Caco-2 (cell line): ENCODE measurements at regions of chr12 and their contacts with region 1.

Region 1: DNA sequence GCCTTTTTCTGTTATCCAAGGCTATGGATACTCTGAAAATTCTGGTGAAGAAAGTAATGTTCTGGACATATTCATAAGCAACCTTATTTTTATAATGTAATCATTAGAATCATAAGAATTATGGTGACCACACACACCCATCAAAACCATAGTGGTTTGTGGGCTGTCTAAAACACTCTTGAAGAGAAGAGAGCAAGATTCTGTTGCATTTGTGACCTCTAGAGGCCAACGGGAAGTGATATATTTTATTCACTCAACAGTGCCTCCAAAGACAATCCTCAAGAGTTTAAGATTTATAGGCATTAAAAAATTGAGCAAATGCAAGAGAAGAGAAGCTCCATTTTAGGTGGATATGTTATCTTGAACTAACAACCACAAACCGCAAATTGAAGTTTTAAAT is 68.5 kb upstream of the LGR5 start:
- DNase-seq: peak in 1 of 2 experiments; percentile 2
- H3K4me3 ChIP-seq: no peak overlapping the region
- H3K4me3 Mint-ChIP-seq: no peak overlapping the region
- H3K27ac Mint-ChIP-seq: no peak overlapping the region
- H3K4me1 ChIP-seq: peaks cover 3% of the 10 kb centered on the region; the same call in 1 of the 2 replicates
- H3K4me1 Mint-ChIP-seq: no peaks in the 10 kb centered on the region
- H3K27me3 ChIP-seq: no peaks in the 10 kb centered on the region
- H3K27me3 Mint-ChIP-seq: no peaks in the 10 kb centered on the region
- CTCF ChIP-seq: peak in 1 of 2 experiments; percentile 22

Region 2: DNA sequence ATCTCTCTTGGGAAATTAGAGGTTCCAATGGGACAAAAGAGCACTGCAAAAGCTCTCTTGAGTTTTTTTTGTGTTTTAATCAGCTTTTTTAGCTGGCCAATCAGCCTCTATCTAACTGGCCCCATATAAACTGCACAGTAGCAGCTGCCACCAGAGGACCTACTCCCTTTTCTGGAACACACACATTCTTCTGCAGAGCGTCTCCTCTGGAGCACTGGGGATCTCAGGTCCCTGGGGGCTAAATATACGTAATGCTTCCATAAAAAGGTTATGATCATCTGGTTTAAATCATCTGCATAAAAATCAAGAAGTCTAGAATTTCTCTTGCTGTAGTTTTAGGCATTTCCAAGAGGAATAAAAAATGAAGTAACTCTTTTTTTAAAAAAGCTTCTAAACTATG is 245.6 kb before region 1 on chr12:
- CTCF ChIA-PET with region 1: no interaction called
- POLR2A ChIA-PET with region 1: no interaction called
- intact Hi-C with region 1: loop called (anchors 1 kb)
- DNase-seq: no peak
- H3K4me3 ChIP-seq: no peak overlapping the region
- H3K4me3 Mint-ChIP-seq: no peak overlapping the region
- H3K27ac Mint-ChIP-seq: no peak overlapping the region
- H3K4me1 ChIP-seq: no peaks in the 10 kb centered on the region
- H3K4me1 Mint-ChIP-seq: no peaks in the 10 kb centered on the region
- H3K27me3 ChIP-seq: no peaks in the 10 kb centered on the region
- H3K27me3 Mint-ChIP-seq: no peaks in the 10 kb centered on the region
- CTCF ChIP-seq: peak in 1 of 2 experiments; percentile 25

Region 3: DNA sequence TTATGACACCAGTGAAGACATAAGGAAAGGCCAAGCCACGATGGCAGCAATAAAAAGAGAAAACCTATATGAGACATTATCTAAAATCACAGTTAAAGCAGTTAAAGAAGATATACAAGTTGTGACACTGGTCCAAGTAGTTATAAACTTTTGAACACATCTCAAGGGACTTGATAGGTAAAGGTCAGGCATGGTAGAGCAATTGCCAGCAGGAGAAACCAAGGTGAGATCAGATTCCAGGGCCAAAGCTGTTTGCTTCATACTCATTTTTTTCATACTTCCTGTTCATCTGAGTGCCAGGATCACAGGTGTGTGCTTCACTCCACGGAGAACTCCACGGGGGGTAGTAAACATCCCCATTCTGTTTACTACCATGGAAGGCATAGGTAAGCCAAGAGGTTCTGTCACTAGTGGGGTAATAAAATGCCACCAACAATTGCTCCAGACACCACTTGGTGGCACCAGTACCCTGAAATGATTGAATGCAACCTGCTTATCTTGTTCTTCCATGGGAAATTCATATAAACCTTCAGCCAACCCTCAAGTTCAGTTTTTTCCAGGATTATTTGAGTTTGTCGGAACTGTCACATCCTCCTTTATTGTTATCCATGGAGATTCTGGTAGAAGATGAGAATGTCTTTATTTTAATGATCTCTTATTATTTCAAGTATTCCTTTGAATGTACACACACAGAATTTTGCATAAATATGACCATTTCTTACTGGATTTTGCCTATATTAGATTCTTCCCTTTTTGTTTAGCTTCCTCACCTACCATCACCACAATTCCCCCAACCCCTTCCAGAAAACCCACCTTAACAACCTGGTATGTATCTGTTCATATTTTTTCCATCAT is 154.2 kb before region 1 on chr12:
- CTCF ChIA-PET with region 1: no interaction called
- POLR2A ChIA-PET with region 1: no interaction called
- intact Hi-C with region 1: loop called (anchors 1 kb)
- DNase-seq: peak; percentile 49 to 54
- H3K4me3 ChIP-seq: no peak overlapping the region
- H3K4me3 Mint-ChIP-seq: no peak overlapping the region
- H3K27ac Mint-ChIP-seq: no peak overlapping the region
- H3K4me1 ChIP-seq: peaks cover 18% of the 10 kb centered on the region
- H3K4me1 Mint-ChIP-seq: peaks cover 13% of the 10 kb centered on the region
- H3K27me3 ChIP-seq: no peaks in the 10 kb centered on the region
- H3K27me3 Mint-ChIP-seq: no peaks in the 10 kb centered on the region
- CTCF ChIP-seq: peak; percentile 39 to 43

Region 4: DNA sequence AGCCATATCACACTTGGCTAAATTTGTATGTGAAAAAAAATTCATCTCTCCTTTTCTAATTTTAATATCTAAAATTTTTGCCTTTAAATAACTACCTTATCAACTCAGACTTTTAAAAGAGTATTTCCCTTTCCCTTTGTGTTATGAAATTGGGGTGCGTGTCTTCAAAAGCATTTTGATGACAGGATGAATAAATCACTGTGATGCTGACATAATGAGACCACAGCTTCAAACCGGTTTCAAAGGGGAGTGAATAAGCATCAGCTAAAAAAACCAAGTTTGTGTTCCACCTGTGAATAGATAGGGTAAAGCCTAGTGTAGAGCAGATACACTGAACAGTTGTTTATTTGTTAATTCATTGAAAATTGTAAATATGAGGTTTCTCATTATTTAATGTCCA is 153.5 kb after region 1 on chr12:
- CTCF ChIA-PET with region 1: no interaction called
- POLR2A ChIA-PET with region 1: no interaction called
- intact Hi-C with region 1: no loop called
- DNase-seq: no peak
- H3K4me3 ChIP-seq: no peak overlapping the region
- H3K4me3 Mint-ChIP-seq: no peak overlapping the region
- H3K27ac Mint-ChIP-seq: no peak overlapping the region
- H3K4me1 ChIP-seq: no peaks in the 10 kb centered on the region
- H3K4me1 Mint-ChIP-seq: no peaks in the 10 kb centered on the region
- H3K27me3 ChIP-seq: no peaks in the 10 kb centered on the region
- H3K27me3 Mint-ChIP-seq: no peaks in the 10 kb centered on the region
- CTCF ChIP-seq: no peak